Right cardiac atrium (tissue), 5 donors: ENCODE measurements at regions of chr6 and their contacts with region 1.

Region 1: DNA sequence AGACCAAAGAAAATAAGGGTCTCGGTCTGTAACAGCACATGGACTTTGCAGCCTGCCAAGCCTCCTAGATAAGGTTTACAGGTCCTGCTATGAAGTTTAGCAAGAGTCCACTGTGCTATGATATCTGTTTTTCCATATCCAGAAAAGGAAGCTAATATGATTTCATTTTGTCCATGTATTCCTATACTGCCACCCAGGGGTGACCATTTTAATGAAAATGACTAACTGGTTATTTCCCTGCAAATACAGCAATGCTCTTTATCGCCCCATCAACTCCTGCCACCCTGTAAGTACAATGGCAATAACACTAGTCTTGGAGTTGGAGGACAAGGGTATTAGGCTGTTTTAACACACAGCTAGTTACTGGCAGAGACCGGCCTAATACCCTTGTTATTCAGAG is 115.1 kb upstream of the GLP1R start:
- DNase-seq: no peak
- ATAC-seq: no peak
- H3K4me3 ChIP-seq: no peak overlapping the region
- H3K27ac ChIP-seq: no peak overlapping the region
- H3K4me1 ChIP-seq: peaks cover 2% of the 10 kb centered on the region
- H3K27me3 ChIP-seq: no peaks in the 10 kb centered on the region

Region 2: DNA sequence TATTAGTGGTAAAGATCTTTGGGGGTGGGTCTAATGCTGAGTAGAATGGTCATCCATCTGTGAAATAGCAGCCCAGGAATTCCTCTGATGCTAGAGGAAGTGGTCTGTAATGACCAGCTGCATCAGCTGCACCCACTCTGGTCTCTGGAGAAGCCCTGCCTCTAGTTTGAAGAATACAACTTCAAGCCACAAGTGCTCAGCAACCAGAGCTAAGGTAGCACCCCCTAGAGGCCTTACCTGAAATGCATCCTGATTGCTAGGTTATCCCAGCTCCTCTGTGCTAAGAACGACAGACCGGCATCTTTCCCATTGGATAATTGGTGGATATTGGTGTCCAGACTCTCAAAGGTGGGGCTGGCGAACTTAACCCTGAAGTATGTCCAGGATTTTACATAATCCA is 160.1 kb before region 1 on chr6:
- intact Hi-C with region 1: no loop called
- DNase-seq: no peak
- ATAC-seq: no peak
- H3K4me3 ChIP-seq: no peak overlapping the region
- H3K27ac ChIP-seq: no peak overlapping the region
- H3K4me1 ChIP-seq: no peaks in the 10 kb centered on the region
- H3K27me3 ChIP-seq: peaks cover 2% of the 10 kb centered on the region

Region 3: DNA sequence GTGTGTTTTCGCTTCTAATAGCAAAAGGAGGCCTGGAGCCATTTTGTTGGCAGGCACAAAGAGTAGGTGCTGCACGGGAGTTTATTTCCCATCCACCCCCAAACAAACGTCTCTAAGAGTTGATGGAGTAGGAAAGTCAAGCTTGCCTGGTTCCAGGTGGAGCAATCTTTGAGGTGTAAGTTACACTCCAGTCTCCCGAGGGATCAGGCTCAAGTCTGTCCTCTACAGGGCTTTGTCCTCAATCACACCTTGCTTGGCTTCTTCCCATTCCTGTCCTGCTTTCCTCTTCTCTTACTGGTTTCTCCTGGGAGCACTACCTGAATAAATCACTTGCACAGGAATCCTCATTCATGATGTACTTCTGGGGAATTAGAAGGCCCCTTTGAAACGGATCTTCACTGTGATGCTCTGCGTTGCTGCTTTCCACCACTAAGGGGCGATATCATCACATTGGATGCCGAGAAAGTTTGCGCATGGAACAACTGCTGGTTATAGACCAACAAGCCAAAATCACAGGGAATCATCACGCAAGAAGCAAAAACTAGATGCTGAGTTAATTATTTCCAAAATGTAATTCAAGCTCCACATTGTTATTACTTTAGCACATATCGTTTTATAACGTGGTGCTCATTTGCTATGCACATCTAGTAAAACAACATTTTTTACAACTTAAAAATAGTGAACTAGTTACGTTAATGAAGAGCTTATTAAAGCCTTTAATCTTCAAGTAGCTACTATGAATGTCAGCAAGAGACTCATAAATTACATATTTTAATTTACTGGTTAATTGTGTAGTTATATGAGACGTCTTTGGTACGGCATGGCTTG is 61.5 kb before region 1 on chr6:
- intact Hi-C with region 1: loop called in 1 of 4 experiments (anchors 10 kb)
- DNase-seq: peak in 2 of 3 donors; percentile 20 to 61
- ATAC-seq: peak; percentile 49 to 60
- H3K4me3 ChIP-seq: no peak overlapping the region
- H3K27ac ChIP-seq: no peak overlapping the region
- H3K4me1 ChIP-seq: no peaks in the 10 kb centered on the region
- H3K27me3 ChIP-seq: peaks cover 2% of the 10 kb centered on the region